Ovary (tissue), 10 donors: ENCODE measurements at regions of chr2 and their contacts with region 1.

Region 1: DNA sequence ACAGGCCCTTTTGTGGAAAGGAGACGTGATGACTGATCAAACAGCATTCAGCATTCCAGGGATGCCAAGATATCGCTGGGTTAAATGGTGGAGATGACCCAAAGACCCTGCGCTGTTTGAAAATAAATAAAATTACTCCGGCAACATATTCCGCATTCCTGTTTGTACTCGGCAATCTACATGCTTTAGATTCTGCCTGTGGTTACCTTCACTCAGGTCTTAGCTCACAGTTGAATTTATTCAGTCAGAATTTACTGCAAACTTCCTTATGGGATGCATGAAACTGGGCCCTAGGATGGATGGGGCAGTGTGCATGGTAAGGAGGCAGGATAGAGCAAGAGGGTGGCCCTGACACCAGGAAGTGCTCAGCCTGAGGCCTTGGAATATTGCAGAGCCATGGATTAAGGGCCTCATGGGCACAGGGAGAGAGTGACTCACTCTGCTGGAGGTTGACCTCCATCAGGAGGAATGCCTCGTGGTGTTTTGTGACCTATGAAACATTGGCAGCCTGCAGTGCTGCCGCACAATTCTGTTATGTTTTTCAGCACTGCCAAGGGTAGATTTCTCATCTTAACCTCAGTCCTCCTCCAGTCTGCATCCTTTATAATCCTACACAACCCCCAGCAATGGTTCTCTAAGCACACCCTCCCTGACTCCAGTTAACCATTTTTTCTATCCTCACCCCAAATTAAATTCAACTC is 321.4 kb downstream of the IRS1 start:
- DNase-seq: peak; percentile 49 to 70 (median 62)
- H3K4me3 ChIP-seq: no peak overlapping the region
- H3K27ac ChIP-seq: peak overlapping the region in 1 of 2 donors; percentile 70
- H3K4me1 ChIP-seq: peaks cover 2% of the 10 kb centered on the region
- H3K27me3 ChIP-seq: no peaks in the 10 kb centered on the region
- CTCF ChIP-seq: no peak
- EP300 ChIP-seq: no peak
- POLR2A ChIP-seq: no peak

Region 2: GRCh38 chr2:226198956-226199355 is 279.3 kb before region 1 on chr2:
- intact Hi-C with region 1: no loop called
- DNase-seq: no peak
- H3K4me3 ChIP-seq: no peak overlapping the region
- H3K27ac ChIP-seq: no peak overlapping the region
- H3K4me1 ChIP-seq: no peaks in the 10 kb centered on the region
- H3K27me3 ChIP-seq: no peaks in the 10 kb centered on the region
- CTCF ChIP-seq: no peak
- EP300 ChIP-seq: no peak
- POLR2A ChIP-seq: no peak

Region 3: DNA sequence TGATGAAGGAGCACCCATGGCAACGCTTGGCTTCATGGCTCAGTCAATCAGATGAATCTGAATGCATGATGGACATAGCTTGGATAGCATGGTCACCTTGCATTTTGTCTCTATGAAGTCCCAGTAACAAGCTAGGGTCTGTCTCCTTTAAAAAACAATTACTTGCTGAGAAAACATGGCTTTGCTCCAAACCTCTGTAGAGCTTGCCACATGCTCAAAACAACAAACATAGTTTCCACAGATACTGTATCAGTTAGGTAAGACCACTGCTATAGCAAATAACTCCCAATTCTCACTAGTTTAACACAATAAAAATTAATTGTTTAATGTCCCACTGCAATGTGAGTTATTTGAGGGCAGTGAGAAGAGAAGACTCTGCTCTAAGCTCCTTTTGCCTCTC is 79.7 kb before region 1 on chr2:
- intact Hi-C with region 1: no loop called
- DNase-seq: no peak
- H3K4me3 ChIP-seq: no peak overlapping the region
- H3K27ac ChIP-seq: no peak overlapping the region
- H3K4me1 ChIP-seq: no peaks in the 10 kb centered on the region
- H3K27me3 ChIP-seq: no peaks in the 10 kb centered on the region
- CTCF ChIP-seq: no peak
- EP300 ChIP-seq: no peak
- POLR2A ChIP-seq: no peak

Region 4: GRCh38 chr2:226461981-226462380 is 16.3 kb before region 1 on chr2:
- intact Hi-C with region 1: loop called in 1 of 4 experiments (anchors 1 kb)
- DNase-seq: no peak
- H3K4me3 ChIP-seq: no peak overlapping the region
- H3K27ac ChIP-seq: no peak overlapping the region
- H3K4me1 ChIP-seq: no peaks in the 10 kb centered on the region
- H3K27me3 ChIP-seq: no peaks in the 10 kb centered on the region
- CTCF ChIP-seq: no peak
- EP300 ChIP-seq: no peak
- POLR2A ChIP-seq: no peak